ENCODE measurements at regions of chr12 and their contacts with region 1.

Region 1: GRCh38 chr12:58540480-58541299 is 379.6 kb downstream of the LRIG3 start:
- DNase-seq: peak; percentile 59
- ATAC-seq: peak; percentile 100
- H3K4me3 ChIP-seq: no peak overlapping the region
- H3K27ac ChIP-seq: no peak overlapping the region
- H3K4me1 ChIP-seq: no peaks in the 10 kb centered on the region
- H3K27me3 ChIP-seq: no peaks in the 10 kb centered on the region
- CTCF ChIP-seq: peak; percentile 70 to 83 (median 78); a peak in 5 of 6 replicates
- POLR2A ChIP-seq: no peak
- RAD21 ChIP-seq: peak; percentile 87

Region 2: DNA sequence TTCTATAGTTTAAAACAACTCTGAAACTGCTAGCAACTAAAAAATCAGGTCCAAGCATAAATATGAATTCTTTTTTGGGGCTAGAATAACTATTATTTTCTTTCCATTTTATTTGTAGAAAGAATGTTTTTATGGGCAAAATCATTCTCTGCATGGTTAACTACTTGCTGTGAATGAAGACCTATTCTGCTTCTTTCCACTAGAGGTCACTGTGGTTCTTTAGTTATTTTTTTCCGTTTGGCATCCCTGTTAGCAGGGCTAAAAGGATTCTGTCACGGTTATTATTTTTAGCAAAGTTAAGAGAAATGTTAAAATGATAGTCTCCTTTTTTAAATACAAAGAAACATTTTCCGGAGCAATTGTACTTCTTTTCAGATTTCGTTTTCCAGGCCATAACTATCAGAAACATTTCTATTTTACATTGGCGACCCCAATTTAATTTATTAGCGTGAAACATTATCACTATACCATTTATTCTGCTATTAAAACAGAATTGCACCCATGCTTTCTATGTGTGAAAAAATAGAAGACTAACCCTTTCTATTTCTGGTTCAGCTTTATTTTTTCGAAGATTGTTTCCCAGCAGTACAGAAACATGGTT is 194.6 kb before region 1 on chr12:
- CTCF ChIA-PET with region 1: interaction called, 3 read pairs
- POLR2A ChIA-PET with region 1: no interaction called
- RAD21 ChIA-PET with region 1: no interaction called
- intact Hi-C with region 1: loop called (anchors 5 kb)
- DNase-seq: peak; percentile 12
- ATAC-seq: peak; percentile 77
- H3K4me3 ChIP-seq: no peak overlapping the region
- H3K27ac ChIP-seq: no peak overlapping the region
- H3K4me1 ChIP-seq: no peaks in the 10 kb centered on the region
- H3K27me3 ChIP-seq: no peaks in the 10 kb centered on the region
- CTCF ChIP-seq: peak; percentile 70 to 79 (median 78)
- POLR2A ChIP-seq: no peak
- RAD21 ChIP-seq: peak; percentile 77

Region 3: DNA sequence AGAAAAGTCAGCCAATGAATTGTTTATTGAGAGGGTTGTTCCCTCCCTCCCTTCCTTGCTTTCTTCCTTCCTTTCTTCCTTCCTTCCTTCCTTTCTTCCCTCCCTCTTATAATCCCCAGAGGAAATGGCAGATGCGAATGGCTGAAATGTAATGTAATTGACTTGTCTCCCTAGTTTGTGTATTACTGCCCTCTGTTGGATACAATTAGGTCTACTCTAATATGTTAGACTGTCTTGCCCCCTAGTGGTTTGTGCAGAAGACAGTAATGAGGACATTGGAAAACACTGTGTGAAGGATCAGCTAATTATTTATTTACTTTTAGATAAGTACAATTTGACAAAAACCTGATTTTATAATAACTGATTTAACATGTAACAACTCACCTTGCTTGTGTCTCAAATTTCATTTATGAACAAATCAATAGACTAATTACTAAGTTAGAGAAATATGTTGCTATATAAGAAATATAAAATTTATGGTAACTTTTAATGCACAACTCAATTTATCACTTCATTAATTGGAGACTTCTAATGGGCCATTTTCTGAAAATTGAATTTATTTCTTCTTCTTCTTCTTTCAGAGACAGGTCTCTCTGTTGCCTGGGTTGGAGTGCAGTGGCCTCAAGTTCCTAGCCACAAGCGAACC is 609.4 kb after region 1 on chr12:
- CTCF ChIA-PET with region 1: interaction called, 24 read pairs
- POLR2A ChIA-PET with region 1: no interaction called
- RAD21 ChIA-PET with region 1: interaction called, 3 to 6 read pairs
- intact Hi-C with region 1: loop called (anchors 1 kb)
- DNase-seq: peak; percentile 79
- ATAC-seq: peak; percentile 98
- H3K4me3 ChIP-seq: no peak overlapping the region
- H3K27ac ChIP-seq: no peak overlapping the region
- H3K4me1 ChIP-seq: no peaks in the 10 kb centered on the region
- H3K27me3 ChIP-seq: no peaks in the 10 kb centered on the region
- CTCF ChIP-seq: peak; percentile 92 to 100 (median 98)
- POLR2A ChIP-seq: no peak
- RAD21 ChIP-seq: peak; percentile 94

Region 4: DNA sequence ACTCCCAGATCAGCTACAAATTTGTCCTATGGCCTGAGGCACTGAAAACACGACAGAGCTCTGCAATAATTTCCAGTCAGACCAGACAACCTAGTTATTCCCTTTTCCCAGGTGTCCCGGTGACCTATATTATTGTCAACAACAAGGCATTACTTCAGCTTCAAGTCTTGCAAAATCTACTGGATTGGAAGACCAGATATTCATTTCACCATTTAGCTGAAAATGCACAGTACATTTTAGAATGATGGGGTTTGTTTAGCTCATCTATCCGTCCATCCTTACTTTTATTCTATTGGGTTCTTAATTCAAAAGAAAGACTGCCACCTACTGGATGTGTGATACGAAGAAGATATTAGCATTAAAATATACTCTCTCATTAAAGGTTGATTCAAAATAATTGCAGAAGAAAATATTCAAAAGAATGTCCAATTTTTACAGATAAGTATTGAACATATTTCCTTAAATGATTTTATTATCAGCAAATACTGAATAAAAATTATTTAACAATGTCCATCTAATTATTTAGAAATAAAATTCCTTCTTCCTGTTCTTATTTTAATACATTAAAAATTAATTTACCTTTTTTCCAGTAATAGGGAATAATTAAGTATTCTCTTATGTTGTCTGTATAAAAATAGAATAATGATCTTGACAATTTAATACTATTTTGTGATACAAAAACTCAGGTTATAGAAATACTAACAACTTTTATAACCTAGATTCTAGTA is 624.5 kb after region 1 on chr12:
- CTCF ChIA-PET with region 1: interaction called, 17 read pairs
- POLR2A ChIA-PET with region 1: no interaction called
- RAD21 ChIA-PET with region 1: no interaction called
- intact Hi-C with region 1: loop called (anchors 1 kb)
- DNase-seq: peak; percentile 16
- ATAC-seq: peak; percentile 61
- H3K4me3 ChIP-seq: no peak overlapping the region
- H3K27ac ChIP-seq: no peak overlapping the region
- H3K4me1 ChIP-seq: no peaks in the 10 kb centered on the region
- H3K27me3 ChIP-seq: no peaks in the 10 kb centered on the region
- CTCF ChIP-seq: peak; percentile 40 to 69 (median 46); a peak in 5 of 6 replicates
- POLR2A ChIP-seq: no peak
- RAD21 ChIP-seq: peak; percentile 49